A673 (cell line): ENCODE measurements at regions of chr2 and their contacts with region 1.

Region 1: GRCh38 chr2:54052825-54053718 is 62.3 kb upstream of the ACYP2 start:
- DNase-seq: peak; percentile 49
- H3K4me3 ChIP-seq: no peak overlapping the region
- H3K27ac ChIP-seq: no peak overlapping the region
- H3K4me1 ChIP-seq: peaks cover 4% of the 10 kb centered on the region
- H3K27me3 ChIP-seq: no peaks in the 10 kb centered on the region
- CTCF ChIP-seq: peak; percentile 51

Region 2: DNA sequence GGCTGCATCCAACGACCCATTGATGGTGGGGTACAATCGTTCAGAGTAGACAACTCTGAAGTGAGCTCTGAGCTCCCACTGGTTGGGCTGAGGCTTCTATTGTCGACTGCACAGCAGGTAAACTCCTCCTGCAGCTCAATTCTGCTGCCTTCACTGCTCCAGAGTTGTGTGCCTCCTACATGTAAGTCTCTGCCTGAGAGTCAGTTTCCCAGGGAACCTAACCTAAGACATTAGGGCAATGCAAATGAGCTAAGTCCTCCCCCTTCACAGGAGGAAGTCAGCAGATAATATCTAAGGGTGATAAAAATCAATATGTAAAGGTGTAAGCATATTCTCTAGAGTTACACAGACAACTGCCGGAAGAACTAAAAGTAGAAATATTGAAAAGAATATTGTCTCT is 39.9 kb after region 1 on chr2:
- CTCF ChIA-PET with region 1: no interaction called
- POLR2A ChIA-PET with region 1: interaction called, 11 read pairs
- intact Hi-C with region 1: no loop called
- DNase-seq: no peak
- H3K4me3 ChIP-seq: no peak overlapping the region
- H3K27ac ChIP-seq: no peak overlapping the region
- H3K4me1 ChIP-seq: no peaks in the 10 kb centered on the region
- H3K27me3 ChIP-seq: no peaks in the 10 kb centered on the region
- CTCF ChIP-seq: no peak